Dendritic cell treated with granulocyte-macrophage colony-stimulating factor and Interleukin-4, amounts not matched to agents 40 ng/mL and 50 ng/mL, for 4 days (primary cell): ENCODE measurements at regions of chr20 and their contacts with region 1.

Region 1: GRCh38 chr20:41738604-41739206 is 120.5 kb upstream of the CHD6 start:
- H3K4me3 Mint-ChIP-seq: no peak overlapping the region
- H3K27ac Mint-ChIP-seq: no peak overlapping the region
- H3K4me1 Mint-ChIP-seq: no peaks in the 10 kb centered on the region
- H3K27me3 Mint-ChIP-seq: no peaks in the 10 kb centered on the region

Region 2: DNA sequence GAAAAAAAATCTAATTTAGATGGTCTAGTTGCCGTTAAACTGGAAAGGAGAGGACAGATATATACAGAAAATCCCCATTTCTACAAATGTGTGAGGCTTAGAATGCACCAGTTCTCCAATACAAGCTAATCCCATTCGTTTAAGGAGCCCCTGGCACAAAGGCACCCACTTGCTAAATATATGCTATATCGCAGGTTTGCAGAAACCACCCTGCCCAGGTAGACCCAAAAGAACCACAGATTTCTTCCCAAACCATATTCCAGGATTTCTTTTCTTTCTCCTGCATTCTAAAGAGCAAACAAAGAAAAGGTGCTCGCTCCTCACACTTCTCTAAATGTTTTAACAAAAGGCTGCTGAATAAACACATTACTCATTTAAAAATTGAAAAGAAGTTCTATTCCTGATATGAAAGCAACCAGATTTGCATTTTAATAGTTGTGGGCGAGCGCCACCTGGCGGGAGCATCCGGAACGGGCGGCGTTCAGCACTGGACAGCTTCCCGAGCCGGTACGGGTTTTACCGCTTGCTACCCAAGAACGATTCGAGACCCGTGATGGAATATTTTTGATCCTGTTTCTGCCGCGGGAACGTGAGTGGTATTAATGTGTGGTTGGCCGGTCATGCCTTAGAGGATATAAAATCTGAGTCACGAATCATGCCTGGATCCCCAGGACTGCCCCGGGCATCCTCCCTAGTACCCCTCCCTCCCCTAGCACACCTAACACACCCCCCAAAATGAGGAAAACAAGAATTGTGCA is 1449.0 kb after region 1 on chr20:
- intact Hi-C with region 1: loop called (anchors 1 kb)
- H3K4me3 Mint-ChIP-seq: no peak overlapping the region
- H3K27ac Mint-ChIP-seq: no peak overlapping the region
- H3K4me1 Mint-ChIP-seq: no peaks in the 10 kb centered on the region
- H3K27me3 Mint-ChIP-seq: peaks cover 49% of the 10 kb centered on the region

Region 3: GRCh38 chr20:43408848-43409576 is 1670.3 kb after region 1 on chr20:
- intact Hi-C with region 1: loop called (anchors 2 kb)
- H3K4me3 Mint-ChIP-seq: no peak overlapping the region
- H3K27ac Mint-ChIP-seq: no peak overlapping the region
- H3K4me1 Mint-ChIP-seq: peaks cover 5% of the 10 kb centered on the region
- H3K27me3 Mint-ChIP-seq: peaks cover 9% of the 10 kb centered on the region